Kidney (tissue), 22 donors: ENCODE measurements at regions of chr12 and their contacts with region 1.

Region 1: GRCh38 chr12:22100958-22101748 is 55.1 kb downstream of the CMAS start:
- DNase-seq: peak in 2 of 5 donors; percentile 8 to 30
- H3K4me3 ChIP-seq: no peak overlapping the region
- H3K27ac ChIP-seq: no peak overlapping the region
- H3K4me1 ChIP-seq: no peaks in the 10 kb centered on the region
- H3K27me3 ChIP-seq: no peaks in the 10 kb centered on the region
- CTCF ChIP-seq: peak; percentile 37

Region 2: DNA sequence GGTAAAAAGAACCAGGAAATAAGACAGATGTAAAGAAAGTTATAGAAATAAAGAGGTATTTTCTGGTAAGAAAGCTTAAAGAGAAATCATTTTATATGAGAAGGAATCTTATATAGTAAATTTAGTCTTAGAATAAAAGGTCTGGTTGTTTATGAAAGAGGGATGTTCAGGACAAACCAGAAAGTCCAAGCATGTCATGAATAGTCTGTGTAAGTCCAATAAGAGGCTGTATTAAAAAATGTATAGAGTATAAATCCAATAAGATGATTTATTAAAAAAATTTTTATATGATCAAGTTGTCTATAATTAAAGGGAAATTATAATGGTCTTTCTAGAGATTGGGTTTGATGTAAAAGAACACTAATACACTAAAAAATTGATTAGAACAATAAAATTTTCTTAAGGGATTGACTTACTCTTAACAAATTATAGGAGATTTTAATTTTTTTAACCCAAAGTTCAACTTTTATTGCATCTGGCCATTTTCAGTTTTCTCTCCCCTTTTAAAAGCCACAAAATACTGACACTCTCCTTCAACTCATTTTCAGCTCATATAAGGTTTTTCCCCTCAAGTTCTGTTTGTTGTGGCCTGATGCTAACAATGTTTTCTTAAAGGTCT is 198.2 kb after region 1 on chr12:
- intact Hi-C with region 1: no loop called
- DNase-seq: no peak
- H3K4me3 ChIP-seq: no peak overlapping the region
- H3K27ac ChIP-seq: no peak overlapping the region
- H3K4me1 ChIP-seq: no peaks in the 10 kb centered on the region
- H3K27me3 ChIP-seq: no peaks in the 10 kb centered on the region
- CTCF ChIP-seq: no peak

Region 3: GRCh38 chr12:22334410-22335290 is 233.5 kb after region 1 on chr12 and contains the start of gene ST8SIA1:
- intact Hi-C with region 1: loop called (anchors 10 kb)
- DNase-seq: peak in 3 of 5 donors; percentile 8 to 81 (median 74)
- H3K4me3 ChIP-seq: peak within 1 kb of the TSS; percentile 73 to 79 (median 75)
- H3K27ac ChIP-seq: no peak within 1 kb of the TSS
- H3K4me1 ChIP-seq: no peaks in the 10 kb centered on the region
- H3K27me3 ChIP-seq: peaks cover 3% of the 10 kb centered on the region
- CTCF ChIP-seq: no peak
- total RNA-seq, gene ST8SIA1: 4.7 TPM